AG04450 (cell line): ENCODE measurements at regions of chr17 and their contacts with region 1.

Region 1: DNA sequence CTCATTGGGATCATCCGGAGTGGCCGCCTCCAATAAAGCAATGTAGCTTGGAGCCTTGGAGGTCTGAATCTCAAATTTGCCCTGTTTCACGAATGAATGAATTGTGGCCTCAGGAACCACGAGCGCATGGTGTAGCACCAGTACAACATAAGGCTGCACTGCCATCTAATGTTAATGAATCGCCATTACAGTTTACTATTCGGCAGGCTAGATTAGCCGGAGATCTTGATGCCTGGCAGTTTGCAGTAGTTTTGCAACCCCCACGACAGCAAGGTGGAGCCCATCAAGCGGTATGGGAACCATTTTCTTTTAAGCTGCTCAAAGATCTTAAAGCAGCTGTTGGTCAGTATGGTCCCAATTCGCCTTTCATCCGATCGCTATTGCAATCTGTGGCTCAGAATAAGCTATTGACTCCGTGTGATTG is 18.8 kb downstream of the ALOX15B start:
- DNase-seq: peak; percentile 51
- H3K4me3 ChIP-seq: no peak overlapping the region
- H3K27ac ChIP-seq: no peak overlapping the region
- H3K27me3 ChIP-seq: peaks cover 40% of the 10 kb centered on the region
- CTCF ChIP-seq: peak; percentile 76

Region 2: DNA sequence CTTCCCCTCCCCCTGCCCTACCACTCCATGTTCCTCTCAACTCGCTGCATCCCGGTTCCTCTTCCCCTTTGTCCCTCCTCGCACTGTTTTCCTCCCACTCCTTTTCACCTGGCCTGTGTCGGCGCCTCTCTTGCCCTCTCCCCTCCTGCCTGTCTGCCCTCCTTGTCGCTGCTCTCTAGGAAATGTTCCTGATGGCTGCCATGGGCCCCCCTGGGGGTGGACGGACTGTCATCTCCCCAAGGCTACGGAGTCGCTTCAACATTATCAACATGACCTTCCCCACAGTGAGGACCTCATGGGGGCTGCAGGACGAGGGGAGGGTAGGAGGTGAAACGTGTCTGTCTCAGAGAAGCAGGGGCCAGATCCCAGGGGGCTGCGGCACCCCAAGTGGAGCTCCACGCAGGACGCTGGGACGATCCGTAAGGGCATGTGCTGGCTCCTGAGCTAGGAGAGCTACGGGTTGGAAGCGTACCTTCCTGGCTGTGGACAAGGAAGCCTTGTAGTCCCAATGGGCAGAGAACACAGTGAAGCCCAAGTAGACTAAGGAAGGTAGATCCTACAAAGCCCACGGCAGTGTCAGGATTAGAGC is 263.5 kb before region 1 on chr17:
- CTCF ChIA-PET with region 1: no interaction called
- POLR2A ChIA-PET with region 1: no interaction called
- DNase-seq: no peak
- H3K4me3 ChIP-seq: no peak overlapping the region
- H3K27ac ChIP-seq: no peak overlapping the region
- H3K27me3 ChIP-seq: peaks cover 11% of the 10 kb centered on the region
- CTCF ChIP-seq: no peak

Region 3: DNA sequence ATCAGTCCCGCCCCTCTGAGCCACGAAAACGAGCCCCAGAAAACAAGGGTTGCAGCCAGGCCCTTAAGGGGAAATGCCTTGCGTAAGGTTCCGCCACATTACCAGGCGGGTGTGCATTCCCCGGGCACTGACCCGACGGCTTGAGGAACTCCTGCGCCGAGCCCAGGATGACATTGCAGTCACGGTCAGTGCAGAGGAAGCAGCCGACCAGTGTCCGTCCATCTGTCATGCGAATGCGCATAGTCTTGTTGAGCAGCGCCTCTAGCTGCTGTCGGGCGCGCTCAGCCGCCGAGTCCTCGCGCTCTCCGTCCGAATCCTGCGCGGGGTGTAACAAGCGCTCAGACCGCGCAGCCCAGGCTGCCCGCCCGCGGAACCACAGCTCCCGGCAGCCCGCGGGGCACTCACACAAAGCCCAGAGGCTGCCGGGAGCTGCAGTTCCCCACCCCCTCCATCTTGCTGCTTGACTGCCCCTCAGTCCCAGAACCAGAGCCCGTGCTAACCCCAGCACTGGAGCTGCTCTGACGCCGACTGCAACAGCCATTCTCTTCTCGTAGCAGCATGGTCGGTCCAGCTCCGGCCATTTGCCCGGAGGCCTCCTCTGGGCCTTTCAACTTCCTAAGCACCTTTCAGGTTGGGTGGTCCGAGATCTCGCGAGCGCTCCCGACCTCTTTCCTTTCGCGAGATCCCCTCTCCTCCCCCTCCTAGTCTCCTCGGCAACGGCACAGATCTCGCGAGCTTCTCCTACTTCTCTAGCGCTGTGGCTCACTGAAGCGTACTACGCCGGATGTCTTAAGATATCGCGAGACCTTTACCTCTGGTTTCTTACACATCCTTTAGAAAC is 200.6 kb before region 1 on chr17 and contains the start of gene NAA38:
- CTCF ChIA-PET with region 1: interaction called, 10 read pairs
- POLR2A ChIA-PET with region 1: no interaction called
- DNase-seq: peak; percentile 99
- H3K4me3 ChIP-seq: peak within 1 kb of the TSS; percentile 81
- H3K27ac ChIP-seq: peak within 1 kb of the TSS; percentile 91
- H3K27me3 ChIP-seq: no peaks in the 10 kb centered on the region
- CTCF ChIP-seq: peak; percentile 55
- polyA plus RNA-seq, gene NAA38: 49.3 and 59.0 TPM in 2 replicates

Region 4: DNA sequence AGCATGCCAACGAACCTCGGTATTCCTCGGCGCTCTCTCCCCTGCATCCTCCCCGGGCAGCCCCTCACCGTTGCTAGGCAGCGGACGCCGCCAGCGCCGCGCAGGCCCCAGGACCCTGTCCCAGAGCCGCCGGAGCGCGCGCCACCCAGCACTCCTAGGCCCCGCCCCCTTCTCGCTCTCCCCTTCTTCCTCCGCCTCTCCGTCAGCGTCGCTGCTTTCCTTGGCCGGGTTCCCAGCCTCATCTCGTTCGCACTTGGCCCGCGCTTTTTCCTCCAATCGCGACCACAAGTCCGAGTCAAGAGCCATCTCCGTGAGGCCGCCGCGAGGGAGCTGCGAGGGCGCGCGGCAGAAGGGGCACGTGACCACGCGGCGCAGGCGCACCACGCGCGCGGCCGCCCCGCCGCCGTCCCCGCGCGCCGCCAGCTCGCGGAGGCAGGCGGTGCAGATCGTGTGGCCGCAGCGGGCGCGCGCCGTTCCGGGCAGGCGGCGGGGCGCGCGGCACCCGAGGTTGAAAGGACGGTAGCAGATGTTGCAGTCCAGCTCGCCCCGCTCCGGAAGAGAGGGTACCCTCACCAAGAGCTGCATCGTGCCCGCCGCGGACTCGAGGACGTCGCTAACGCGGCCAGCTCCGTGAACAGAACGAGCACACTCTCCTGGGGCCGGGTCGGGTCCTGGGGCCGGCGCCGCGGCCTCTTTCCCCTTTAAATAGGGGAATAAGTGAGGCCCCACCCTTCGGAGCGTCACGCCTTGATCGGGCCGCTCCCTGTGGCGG is 141.9 kb before region 1 on chr17 and contains the start of gene RNF227:
- CTCF ChIA-PET with region 1: interaction called, 23 read pairs
- POLR2A ChIA-PET with region 1: interaction called, 4 read pairs
- DNase-seq: peak; percentile 92
- H3K4me3 ChIP-seq: peak within 1 kb of the TSS; percentile 74
- H3K27ac ChIP-seq: peak within 1 kb of the TSS; percentile 89
- H3K27me3 ChIP-seq: no peaks in the 10 kb centered on the region
- CTCF ChIP-seq: no peak
- polyA plus RNA-seq, gene RNF227: 1.3 and 1.4 TPM in 2 replicates

Region 5: GRCh38 chr17:8041249-8041928 is 16.3 kb before region 1 on chr17:
- CTCF ChIA-PET with region 1: interaction called, 22 read pairs
- POLR2A ChIA-PET with region 1: no interaction called
- DNase-seq: peak; percentile 29
- H3K4me3 ChIP-seq: no peak overlapping the region
- H3K27ac ChIP-seq: peak overlapping the region; percentile 11
- H3K27me3 ChIP-seq: peaks cover 31% of the 10 kb centered on the region
- CTCF ChIP-seq: peak; percentile 65

Region 6: DNA sequence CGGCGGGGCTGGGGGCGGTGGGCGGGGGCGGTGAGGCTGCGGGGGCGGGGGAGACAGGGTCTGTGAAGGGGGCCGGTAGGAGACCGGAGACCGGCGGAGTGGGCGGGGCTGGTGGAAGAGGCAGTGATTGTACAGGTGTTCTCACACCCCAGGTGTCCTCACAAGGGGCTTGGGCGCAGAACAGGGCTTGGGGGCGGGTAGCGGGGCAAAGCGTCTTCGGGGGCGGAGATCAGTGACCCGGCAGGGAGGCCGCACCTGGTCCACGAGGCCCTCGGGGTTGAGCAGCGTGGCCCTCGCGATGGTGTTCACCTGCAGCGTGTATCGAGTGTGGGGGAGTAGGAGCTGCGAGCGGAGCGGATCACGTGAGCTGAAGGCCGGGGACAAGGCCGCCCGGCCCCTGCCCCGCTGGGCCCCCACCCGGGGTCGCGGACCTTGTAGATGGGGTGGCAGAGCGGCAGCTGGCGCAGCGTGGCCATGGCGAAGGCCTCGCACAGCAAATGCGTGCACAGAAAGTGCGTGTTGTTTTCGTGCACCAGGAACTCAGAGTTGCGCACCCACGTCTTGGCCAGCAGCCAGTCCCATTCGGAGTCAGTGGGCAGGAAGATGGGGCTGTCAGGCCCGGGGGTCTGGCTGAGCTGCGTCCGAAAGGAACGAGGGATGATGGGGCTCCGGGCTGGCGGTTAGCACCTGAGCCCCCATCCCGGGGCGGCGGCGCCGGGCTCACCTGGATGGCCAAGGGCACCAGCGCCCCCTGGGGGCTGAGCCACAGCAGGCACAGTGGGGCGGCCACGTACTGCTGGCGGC is 52.2 kb after region 1 on chr17:
- CTCF ChIA-PET with region 1: interaction called, 13 read pairs
- POLR2A ChIA-PET with region 1: no interaction called
- DNase-seq: no peak
- H3K4me3 ChIP-seq: peak overlapping the region; percentile 15; the same call in 1 of the 2 replicates
- H3K27ac ChIP-seq: no peak overlapping the region
- H3K27me3 ChIP-seq: peaks cover 45% of the 10 kb centered on the region
- CTCF ChIP-seq: peak; percentile 70

Region 7: DNA sequence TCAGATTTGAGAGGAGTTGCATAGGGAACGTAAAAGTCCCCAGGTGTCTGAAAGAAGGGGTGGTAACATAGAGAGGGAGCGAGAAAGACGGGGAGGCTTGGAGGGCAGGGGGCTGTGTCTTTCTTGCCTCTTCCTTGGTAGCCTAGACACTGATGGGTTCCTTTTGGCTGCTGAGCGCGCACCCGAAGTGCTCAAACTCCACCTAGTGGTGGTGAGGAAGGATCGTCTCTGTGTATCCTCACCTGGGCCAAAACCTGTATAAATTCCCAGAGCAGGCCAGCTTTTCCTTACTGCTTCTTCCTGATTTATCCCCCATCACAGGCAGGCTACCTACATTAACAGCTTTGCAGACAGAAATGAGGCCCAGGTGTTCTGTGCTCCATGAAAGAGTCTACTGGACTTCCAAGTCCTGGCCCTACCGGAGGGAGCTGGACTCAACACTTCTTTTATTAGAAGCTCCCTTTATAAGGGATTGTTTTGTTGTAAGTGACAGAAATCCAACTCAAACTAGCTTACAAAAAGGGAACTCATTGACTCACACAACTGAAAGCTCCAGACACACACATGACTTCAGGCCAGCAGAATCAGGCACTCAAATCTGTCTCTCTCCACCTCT is 243.0 kb after region 1 on chr17:
- CTCF ChIA-PET with region 1: interaction called, 12 read pairs
- POLR2A ChIA-PET with region 1: no interaction called
- DNase-seq: no peak
- H3K4me3 ChIP-seq: no peak overlapping the region
- H3K27ac ChIP-seq: no peak overlapping the region
- H3K27me3 ChIP-seq: no peaks in the 10 kb centered on the region
- CTCF ChIP-seq: peak; percentile 90